MCF 10A (cell line): ENCODE measurements at regions of chrX and their contacts with region 1.

Region 1: GRCh38 chrX:53481816-53482465 is 47.8 kb upstream of the HSD17B10 start:
- DNase-seq: peak; percentile 76
- H3K4me3 Mint-ChIP-seq: no peak overlapping the region
- H3K27ac Mint-ChIP-seq: no peak overlapping the region
- H3K4me1 Mint-ChIP-seq: peaks cover 14% of the 10 kb centered on the region
- H3K27me3 Mint-ChIP-seq: peaks cover 66% of the 10 kb centered on the region
- CTCF ChIP-seq: peak; percentile 72

Region 2: DNA sequence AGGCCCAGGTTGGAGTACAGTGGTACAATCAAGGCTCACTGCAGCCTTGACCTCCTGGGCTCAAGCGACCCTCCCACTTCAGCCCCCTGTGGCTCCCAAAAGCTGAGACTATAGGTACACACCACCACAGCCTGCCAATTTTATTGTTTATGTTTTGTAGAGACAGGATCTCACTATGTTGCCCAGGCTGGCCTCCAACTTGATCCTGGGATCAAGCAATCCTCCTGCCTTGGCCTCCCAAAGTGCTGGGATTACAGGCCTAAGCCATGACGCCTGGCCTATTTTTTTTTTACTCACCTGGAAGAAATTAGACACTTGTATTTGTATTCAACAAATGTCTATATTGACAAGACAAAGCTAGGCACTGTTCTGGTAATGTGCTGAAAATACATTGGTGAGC is 548.7 kb before region 1 on chrX:
- CTCF ChIA-PET with region 1: no interaction called
- POLR2A ChIA-PET with region 1: no interaction called
- intact Hi-C with region 1: no loop called
- DNase-seq: no peak
- H3K4me3 Mint-ChIP-seq: no peak overlapping the region
- H3K27ac Mint-ChIP-seq: no peak overlapping the region
- H3K4me1 Mint-ChIP-seq: no peaks in the 10 kb centered on the region
- H3K27me3 Mint-ChIP-seq: peaks cover 12% of the 10 kb centered on the region
- CTCF ChIP-seq: no peak

Region 3: DNA sequence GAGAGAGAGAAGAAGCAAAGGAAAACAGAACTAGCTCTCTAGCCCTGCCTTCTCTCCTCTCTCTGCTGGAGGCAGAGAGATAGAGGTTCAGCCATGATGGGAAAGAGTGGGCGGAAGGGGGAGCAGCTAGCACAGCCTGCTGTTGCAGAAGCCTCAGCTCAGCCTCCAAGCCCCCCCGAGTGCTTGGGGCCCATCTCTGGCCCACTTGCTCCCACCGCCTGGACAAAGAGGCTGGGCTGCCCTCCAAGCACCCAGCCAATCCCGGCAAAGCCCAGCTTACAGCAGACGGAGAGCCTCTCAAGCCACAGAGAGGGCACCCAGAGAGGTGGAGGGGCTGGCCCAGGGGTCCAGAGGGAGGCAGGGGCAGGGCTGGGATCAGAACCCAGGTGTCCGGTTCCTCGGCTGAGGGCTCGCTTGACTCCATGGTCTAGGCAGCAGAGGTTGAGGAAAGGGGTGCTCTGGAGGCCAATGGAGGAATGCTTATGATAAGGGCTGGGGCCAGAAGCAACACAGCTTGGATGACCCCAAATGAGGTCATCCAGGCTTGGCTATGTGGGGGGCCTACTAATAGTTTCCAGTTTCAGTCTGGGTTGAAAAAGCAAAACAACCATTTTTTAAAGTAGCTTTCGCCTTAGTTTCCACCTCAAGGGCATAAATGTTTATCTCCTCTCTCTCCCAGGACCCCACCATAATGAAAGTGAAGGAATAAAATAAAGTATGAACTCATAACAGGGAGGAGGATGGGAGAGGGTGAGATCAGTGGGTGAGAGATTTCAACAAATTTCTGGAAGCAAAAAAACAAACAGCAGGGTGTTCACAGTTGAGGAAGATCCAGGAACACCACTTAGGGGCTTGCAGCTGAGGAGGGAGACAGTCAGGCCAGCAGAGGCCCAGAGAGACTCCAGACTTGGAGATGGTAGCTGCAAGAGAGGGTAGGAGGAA is 175.7 kb before region 1 on chrX:
- CTCF ChIA-PET with region 1: interaction called, 62 read pairs
- POLR2A ChIA-PET with region 1: no interaction called
- intact Hi-C with region 1: no loop called
- DNase-seq: no peak
- H3K4me3 Mint-ChIP-seq: no peak overlapping the region
- H3K27ac Mint-ChIP-seq: no peak overlapping the region
- H3K4me1 Mint-ChIP-seq: no peaks in the 10 kb centered on the region
- H3K27me3 Mint-ChIP-seq: peaks cover 48% of the 10 kb centered on the region
- CTCF ChIP-seq: no peak

Region 4: DNA sequence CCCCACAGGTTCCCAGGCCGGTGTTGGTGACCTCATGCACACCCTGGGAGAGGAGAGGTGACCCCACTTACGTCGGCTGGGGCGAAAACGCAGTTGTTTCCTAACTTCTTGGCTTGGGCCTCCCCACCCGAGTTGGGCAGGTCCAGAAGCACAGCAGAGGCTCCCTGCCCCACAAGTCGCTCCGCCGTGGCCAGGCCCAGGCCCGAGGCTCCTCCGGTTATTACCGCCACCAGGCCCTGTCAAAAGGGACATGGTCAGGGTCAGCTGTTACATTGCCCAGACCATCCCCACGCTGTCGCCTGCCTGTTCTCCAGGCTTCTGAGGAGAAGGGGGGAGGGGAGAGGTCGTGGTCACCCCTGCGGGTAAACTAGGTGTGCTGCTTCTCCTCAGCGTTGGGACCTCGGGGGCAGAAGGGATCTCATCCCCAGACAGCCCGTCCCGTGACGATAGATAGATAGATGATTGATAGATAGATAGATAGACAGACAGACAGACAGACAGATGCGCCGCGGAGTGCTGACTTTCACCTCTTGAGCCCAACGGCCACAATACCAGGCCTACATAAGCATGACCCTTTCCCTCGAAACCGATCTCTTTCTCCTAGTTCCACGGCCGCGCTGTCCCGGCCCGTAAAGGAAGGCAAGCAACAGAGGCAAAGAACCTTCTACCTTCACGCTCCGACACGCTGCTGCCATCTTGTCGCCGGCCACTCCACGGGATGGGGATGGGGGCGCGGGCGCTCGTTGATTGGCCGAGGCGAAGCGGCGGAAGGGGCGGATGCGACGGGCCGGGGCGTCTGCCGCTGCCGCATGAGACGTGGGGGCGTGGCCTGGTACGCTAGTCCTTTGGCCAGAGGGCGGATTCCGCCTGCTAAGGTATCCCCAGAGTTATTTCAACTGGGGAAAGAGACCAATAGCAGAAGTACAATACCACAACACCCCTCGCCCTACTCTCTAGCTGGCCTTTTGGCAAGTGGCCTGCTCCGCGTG is 48.0 kb before region 1 on chrX and contains the start of gene HSD17B10:
- CTCF ChIA-PET with region 1: interaction called, 27 read pairs
- POLR2A ChIA-PET with region 1: interaction called, 3 read pairs
- intact Hi-C with region 1: no loop called
- DNase-seq: peak; percentile 79
- H3K4me3 Mint-ChIP-seq: peak within 1 kb of the TSS; percentile 82
- H3K27ac Mint-ChIP-seq: peak within 1 kb of the TSS; percentile 79
- H3K4me1 Mint-ChIP-seq: peaks cover 16% of the 10 kb centered on the region
- H3K27me3 Mint-ChIP-seq: peaks cover 47% of the 10 kb centered on the region
- CTCF ChIP-seq: no peak
- total RNA-seq, gene HSD17B10: 113 and 115 TPM in 2 replicates

Region 5: DNA sequence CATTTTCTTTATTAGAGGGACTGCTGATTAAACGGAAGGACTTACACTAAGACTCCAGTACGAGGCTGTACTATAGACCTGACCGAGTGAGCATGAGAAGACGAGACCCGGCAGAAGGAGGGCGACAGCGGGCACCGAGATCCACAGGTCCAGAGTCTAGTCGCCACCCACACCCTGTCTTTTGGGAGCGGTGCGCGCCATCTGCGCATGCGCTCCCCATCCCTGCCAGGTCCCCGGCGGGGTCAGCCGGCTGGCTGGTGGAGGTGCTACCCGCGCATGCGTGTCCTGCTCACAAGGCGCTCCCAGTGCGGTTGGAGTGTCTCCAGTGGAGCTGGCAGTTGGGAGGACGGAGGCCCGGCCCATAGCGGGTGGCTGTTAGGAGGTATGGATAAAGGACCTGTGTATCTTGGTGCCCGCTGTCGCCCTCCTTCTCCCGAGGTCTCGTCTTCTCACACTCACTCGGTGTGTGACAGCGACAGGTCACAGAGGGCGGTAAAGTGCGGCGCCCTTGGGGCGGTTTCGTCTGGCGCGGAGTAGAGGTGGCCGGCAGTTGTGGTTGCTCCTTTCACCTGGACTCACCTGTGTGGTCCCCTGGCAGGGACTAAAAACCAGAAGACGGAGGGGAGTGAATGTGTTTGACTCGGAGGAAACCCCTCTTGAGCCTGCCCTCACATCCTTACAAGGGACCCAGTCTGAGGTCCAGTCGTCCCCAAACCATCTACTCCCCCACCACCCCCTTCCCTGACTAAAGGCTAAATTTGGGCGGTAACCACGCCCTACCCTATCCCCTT is 40.2 kb before region 1 on chrX:
- CTCF ChIA-PET with region 1: interaction called, 32 read pairs
- POLR2A ChIA-PET with region 1: interaction called, 6 read pairs
- intact Hi-C with region 1: no loop called
- DNase-seq: peak; percentile 82
- H3K4me3 Mint-ChIP-seq: peak overlapping the region; percentile 61
- H3K27ac Mint-ChIP-seq: peak overlapping the region; percentile 21
- H3K4me1 Mint-ChIP-seq: peaks cover 13% of the 10 kb centered on the region
- H3K27me3 Mint-ChIP-seq: peaks cover 24% of the 10 kb centered on the region
- CTCF ChIP-seq: no peak

Region 6: GRCh38 chrX:53458082-53458481 is 23.9 kb before region 1 on chrX:
- CTCF ChIA-PET with region 1: interaction called, 37 read pairs
- POLR2A ChIA-PET with region 1: interaction called, 4 read pairs
- intact Hi-C with region 1: no loop called
- DNase-seq: no peak
- H3K4me3 Mint-ChIP-seq: no peak overlapping the region
- H3K27ac Mint-ChIP-seq: no peak overlapping the region
- H3K4me1 Mint-ChIP-seq: peaks cover 6% of the 10 kb centered on the region
- H3K27me3 Mint-ChIP-seq: peaks cover 47% of the 10 kb centered on the region
- CTCF ChIP-seq: no peak

Region 7: DNA sequence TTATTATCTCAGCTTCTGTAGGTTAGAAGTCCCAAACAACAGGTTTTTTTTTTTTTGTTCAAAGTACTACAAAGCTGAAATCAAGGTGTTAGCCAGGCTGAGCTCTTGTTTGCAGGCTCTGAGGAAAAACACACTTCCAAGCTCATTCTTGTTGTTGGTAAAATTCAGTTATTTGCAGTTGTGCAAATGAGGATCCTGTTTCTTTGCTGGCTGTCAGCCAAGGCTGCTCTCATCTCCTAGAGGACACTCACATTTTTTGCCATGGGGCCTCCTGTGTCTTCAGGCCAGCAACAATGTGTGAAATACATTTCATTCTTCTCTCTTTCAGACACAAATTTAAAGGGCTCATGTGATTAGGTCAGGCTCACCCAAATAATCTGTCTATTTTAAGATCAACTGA is 12.5 kb after region 1 on chrX:
- CTCF ChIA-PET with region 1: interaction called, 80 read pairs
- POLR2A ChIA-PET with region 1: no interaction called
- intact Hi-C with region 1: no loop called
- DNase-seq: peak; percentile 35
- H3K4me3 Mint-ChIP-seq: no peak overlapping the region
- H3K27ac Mint-ChIP-seq: no peak overlapping the region
- H3K4me1 Mint-ChIP-seq: no peaks in the 10 kb centered on the region
- H3K27me3 Mint-ChIP-seq: peaks cover 78% of the 10 kb centered on the region
- CTCF ChIP-seq: no peak

Region 8: DNA sequence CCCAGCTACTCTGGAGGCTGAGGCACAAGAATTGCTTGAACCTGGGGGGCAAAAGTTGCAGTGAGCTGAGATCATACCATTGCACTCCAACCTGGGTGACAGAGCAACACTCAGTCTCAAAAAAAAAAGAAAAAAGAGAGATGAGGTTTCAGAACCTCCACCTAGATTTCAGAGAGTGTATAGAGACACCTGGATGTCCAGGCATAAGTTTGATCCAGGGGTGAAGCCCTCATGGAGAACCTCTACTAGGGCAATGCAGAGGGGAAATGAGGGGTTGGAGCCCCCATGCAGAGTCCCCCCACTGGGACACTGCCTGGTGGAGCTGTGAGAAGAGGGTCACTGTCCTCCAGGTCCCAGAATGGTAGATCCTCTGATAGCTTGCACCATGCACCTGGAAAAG is 45.1 kb after region 1 on chrX:
- CTCF ChIA-PET with region 1: interaction called, 12 read pairs
- POLR2A ChIA-PET with region 1: no interaction called
- intact Hi-C with region 1: no loop called
- DNase-seq: no peak
- H3K4me3 Mint-ChIP-seq: no peak overlapping the region
- H3K27ac Mint-ChIP-seq: no peak overlapping the region
- H3K4me1 Mint-ChIP-seq: no peaks in the 10 kb centered on the region
- H3K27me3 Mint-ChIP-seq: peaks cover 68% of the 10 kb centered on the region
- CTCF ChIP-seq: no peak